WTC11 (cell line): ENCODE measurements at regions of chr2 and their contacts with region 1.

Region 1: DNA sequence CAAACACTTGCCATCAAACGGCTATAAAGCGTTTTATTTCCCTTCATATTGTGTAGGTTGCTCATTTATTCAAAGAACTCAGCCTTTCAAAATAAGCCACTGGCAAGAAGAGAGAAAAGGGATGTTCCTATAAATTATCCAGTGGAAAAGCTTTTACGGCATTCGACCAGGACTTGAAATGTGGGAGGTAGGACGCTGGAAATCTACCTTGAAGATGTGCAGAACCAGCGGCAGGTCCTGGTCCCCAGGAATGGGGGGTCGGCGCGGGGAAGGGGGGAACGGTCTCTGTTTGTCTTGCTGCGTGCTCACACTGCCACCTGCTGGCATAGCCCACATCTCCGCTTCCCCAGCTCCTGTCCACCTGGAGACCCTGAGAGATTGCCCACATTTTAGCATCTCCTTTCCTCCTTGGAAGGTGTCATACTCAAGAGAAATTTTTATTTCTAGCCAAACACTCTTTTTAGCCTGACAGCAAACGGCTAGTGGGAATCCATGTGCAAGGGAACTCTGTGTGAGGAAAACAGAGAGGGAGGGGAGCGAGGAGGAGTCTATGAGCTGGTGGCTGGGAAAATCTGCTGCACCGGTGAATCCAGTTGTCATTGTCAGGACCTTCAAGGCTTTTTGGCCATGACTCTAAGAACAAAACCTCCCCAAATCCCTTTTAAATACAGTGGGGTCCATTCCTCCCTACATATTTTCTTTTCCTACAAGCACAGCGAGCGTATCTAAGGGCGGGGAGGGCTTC is 349.0 kb upstream of the PKDCC start:
- DNase-seq: peak; percentile 78
- ATAC-seq: peak; percentile 94
- H3K4me3 Mint-ChIP-seq: no peak overlapping the region
- H3K27ac Mint-ChIP-seq: no peak overlapping the region
- H3K4me1 Mint-ChIP-seq: peaks cover 17% of the 10 kb centered on the region
- H3K27me3 Mint-ChIP-seq: no peaks in the 10 kb centered on the region; the same call in 1 of the 2 replicates
- CTCF ChIP-seq: peak; percentile 70; the same call in 1 of the 2 replicates

Region 2: DNA sequence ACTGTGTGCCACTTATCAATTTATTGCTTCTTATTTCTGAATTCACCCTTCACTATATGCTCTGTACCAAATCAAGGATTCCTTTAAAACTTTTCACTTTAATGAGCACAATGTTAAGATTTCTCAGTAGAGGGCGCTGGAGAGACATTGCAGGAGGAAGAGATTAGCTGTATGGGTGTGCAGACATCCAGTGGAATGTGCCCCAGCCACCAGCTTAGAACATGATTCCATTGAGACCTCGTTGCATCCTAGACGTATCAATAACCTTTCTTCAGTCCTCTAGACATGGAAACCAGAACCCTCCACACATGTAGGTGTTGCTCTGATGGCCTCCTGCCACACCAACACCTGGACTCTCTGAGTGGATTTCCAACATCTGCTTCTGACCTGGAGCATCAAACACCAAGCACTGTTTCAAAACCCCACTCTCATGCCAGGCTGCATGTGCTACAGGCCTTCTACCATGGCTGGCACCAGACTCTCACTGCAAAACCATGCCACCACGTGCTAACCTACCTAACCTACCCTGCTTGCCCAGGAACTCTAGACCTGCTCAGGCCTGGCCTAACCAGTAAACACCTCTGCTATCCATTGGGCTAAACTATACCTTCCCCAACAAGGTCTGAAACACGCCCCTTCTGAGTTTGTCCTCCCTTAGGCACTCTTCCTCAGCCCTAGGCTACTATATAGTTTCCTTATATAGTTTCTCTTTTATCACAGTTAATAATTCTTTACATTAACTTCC is 284.2 kb before region 1 on chr2:
- CTCF ChIA-PET with region 1: interaction called, 78 read pairs
- POLR2A ChIA-PET with region 1: interaction called, 4 read pairs
- DNase-seq: peak; percentile 21
- ATAC-seq: peak; percentile 97
- H3K4me3 Mint-ChIP-seq: no peak overlapping the region
- H3K27ac Mint-ChIP-seq: no peak overlapping the region
- H3K4me1 Mint-ChIP-seq: no peaks in the 10 kb centered on the region
- H3K27me3 Mint-ChIP-seq: no peaks in the 10 kb centered on the region
- CTCF ChIP-seq: peak; percentile 57

Region 3: DNA sequence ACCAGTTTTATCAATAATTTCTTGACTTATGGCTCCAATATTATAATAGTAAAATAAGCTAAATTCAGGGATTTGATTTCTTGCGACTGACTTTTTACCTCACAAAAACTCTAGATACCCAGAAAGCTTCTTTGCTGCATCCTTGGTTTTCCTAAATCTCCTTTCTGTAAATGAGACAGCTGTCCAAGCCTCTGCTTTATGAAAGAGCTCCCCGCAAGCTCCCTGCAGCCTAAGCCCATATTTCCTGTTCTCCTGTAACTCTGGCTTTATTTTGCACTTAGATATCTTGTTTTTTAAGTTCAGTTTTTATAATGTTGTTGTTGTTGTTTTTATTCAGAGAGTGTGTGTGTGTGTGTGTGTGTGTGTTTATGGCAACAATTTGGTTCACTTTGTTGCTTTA is 12.7 kb before region 1 on chr2:
- CTCF ChIA-PET with region 1: interaction called, 11 read pairs
- POLR2A ChIA-PET with region 1: no interaction called
- DNase-seq: no peak
- ATAC-seq: no peak
- H3K4me3 Mint-ChIP-seq: no peak overlapping the region
- H3K27ac Mint-ChIP-seq: no peak overlapping the region
- H3K4me1 Mint-ChIP-seq: peaks cover 6% of the 10 kb centered on the region
- H3K27me3 Mint-ChIP-seq: no peaks in the 10 kb centered on the region
- CTCF ChIP-seq: no peak

Region 4: GRCh38 chr2:41779892-41780291 is 81.0 kb after region 1 on chr2:
- CTCF ChIA-PET with region 1: interaction called, 10 read pairs
- POLR2A ChIA-PET with region 1: no interaction called
- DNase-seq: no peak
- ATAC-seq: peak; percentile 10
- H3K4me3 Mint-ChIP-seq: no peak overlapping the region
- H3K27ac Mint-ChIP-seq: no peak overlapping the region
- H3K4me1 Mint-ChIP-seq: peaks cover 21% of the 10 kb centered on the region
- H3K27me3 Mint-ChIP-seq: no peaks in the 10 kb centered on the region
- CTCF ChIP-seq: no peak

Region 5: DNA sequence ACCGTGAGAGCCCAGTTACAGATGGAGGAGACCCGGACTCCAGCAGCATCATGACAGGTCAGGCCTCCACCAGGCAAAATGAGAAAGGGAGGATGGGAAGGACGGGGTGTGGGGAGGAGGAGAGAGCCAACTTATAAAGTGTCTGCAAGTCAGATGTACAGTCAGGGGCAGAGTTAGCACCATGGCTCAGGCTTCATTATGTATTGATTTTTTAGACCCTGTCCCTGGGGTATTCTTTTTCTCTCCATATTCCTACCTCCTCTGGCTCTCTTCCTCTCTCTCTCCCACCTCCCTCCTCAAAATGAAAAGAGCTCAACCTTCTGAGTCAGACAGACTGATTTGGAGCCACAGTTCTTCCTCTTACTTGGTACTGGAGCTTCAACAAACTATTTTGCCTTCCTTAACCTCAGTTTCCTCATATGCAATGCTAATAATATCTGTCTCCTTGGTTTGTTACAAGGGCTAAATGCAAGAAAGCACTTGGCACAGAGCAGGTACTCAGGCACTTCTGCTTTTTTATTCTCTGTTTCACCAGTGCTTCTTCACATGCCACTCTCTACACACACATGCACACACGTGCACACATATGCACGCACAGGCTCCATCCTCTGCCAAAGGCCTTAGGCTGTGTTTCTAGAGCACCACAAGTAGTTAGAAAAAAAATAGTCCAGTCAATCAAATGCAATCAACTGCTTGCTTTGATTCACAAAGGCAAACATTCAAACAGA is 256.6 kb after region 1 on chr2:
- CTCF ChIA-PET with region 1: no interaction called
- POLR2A ChIA-PET with region 1: no interaction called
- DNase-seq: no peak
- ATAC-seq: no peak
- H3K4me3 Mint-ChIP-seq: no peak overlapping the region
- H3K27ac Mint-ChIP-seq: no peak overlapping the region
- H3K4me1 Mint-ChIP-seq: peaks cover 20% of the 10 kb centered on the region
- H3K27me3 Mint-ChIP-seq: no peaks in the 10 kb centered on the region; the same call in 1 of the 2 replicates
- CTCF ChIP-seq: no peak